ENCODE measurements at regions of chr1 and their contacts with region 1.

Region 1: DNA sequence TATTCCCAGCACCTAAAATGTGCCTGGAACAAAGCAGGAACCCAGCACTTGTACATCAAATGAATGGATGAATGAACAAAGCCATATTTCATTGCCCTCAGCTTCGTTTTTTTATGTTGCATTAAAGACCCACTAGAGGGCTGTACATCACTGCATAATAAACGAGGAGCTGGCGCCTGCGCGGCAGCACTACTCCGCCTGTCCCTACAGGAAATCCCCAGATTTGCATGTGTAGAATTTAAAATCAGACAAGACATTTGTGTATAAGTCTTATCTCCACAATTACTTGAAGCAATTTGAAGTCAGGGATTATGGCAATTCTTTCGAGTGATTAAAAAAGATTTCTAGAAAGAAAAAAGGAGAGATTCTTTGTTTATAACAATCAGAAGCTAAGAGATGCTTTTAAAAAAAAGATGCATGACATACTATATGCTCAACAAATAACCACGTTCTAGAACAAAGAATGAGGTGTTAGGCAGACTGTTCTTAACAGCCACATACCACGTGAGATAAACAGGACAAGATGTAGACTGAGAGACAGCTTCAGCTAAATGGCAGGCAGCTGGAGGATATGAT is 5.4 kb upstream of the NEK2 start:
- DNase-seq: peak; percentile 69
- H3K4me3 Mint-ChIP-seq: no peak overlapping the region
- H3K27ac Mint-ChIP-seq: no peak overlapping the region
- H3K4me1 Mint-ChIP-seq: peaks cover 11% of the 10 kb centered on the region
- H3K27me3 Mint-ChIP-seq: peaks cover 24% of the 10 kb centered on the region
- CTCF ChIP-seq: peak; percentile 60

Region 2: DNA sequence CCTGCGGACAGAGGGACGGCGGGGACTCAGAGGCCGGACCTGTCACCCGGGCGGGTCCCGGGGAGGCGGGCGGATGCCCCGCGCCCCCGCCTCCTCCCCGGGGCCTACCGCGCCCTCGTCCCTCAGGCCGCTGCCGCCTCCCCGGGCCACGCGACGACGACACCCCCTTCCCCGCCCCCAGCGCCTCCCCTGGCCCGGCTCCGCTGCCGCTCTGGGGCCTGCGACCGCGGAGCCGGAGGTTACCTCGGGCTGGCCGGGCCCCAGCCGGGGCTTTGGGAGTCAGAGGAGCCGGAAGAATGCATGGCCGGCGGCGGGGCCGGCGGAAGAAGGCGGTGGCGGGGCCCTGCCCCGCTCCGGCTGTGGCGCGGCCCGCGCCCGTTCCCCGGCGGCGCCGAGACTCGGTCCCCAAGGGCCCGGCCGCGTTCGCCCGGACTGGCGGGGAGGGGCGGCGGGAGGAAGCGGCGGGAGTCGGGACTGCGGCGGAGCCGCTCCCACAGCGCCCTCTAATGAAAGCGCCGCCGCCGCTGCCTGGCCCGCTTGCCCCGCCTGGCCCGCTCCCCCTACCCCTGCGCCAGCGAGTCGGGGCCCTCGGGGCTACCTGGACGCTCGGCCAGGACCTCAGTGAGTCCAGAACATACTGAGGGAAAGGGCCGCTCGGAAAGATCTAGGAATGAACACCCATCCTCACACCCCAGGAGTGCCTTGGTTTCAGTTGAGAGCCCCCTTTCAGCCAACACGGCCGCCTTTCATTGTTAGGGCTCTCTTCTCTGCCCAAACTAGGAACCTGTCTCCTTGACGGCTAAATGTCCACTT is 149.7 kb after region 1 on chr1 and contains the start of gene LPGAT1:
- CTCF ChIA-PET with region 1: interaction called, 3 read pairs
- intact Hi-C with region 1: loop called (anchors 5 kb)
- DNase-seq: peak; percentile 90
- H3K4me3 Mint-ChIP-seq: peak within 1 kb of the TSS; percentile 79
- H3K27ac Mint-ChIP-seq: peak within 1 kb of the TSS; percentile 65
- H3K4me1 Mint-ChIP-seq: peaks cover 17% of the 10 kb centered on the region
- H3K27me3 Mint-ChIP-seq: no peaks in the 10 kb centered on the region
- CTCF ChIP-seq: peak; percentile 70
- total RNA-seq, gene LPGAT1: 50.6 and 67.7 TPM in 2 replicates

Region 3: DNA sequence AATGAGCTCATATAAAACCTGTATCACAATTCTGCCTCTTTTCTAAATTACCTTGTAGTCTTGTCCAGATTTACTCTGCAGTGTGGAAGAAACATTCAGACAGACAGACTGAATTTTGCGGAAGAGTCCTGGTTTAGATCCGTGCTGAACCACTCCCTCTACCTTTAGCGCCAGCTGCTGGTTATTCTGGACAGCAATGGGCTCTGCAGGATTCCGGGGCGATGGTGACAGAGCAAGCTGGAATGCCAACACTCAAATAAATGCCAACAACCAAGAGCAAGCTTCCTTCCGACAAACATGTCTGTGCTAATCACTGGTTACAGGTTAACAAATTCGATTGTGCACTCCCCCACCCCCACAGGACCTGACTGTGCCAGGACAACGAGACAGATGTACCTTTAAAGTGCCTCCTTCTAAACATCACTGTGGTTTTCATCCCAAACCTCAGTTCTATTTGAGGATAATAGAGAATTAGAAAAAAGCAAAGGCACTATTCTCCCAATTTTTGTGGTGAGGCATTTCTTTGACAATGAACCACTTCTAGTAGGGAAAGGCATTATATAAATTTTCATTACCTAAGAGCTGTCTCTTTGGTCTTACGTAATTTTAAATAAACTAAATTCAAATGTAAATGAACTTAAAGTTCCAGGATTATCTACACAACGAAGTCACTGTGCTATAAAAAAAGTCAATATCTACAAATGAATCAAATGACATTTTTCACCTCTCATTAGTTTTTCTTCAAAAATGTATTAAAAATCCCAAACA is 264.1 kb after region 1 on chr1:
- CTCF ChIA-PET with region 1: interaction called, 25 read pairs
- intact Hi-C with region 1: loop called (anchors 5 kb)
- DNase-seq: peak; percentile 85
- H3K4me3 Mint-ChIP-seq: no peak overlapping the region
- H3K27ac Mint-ChIP-seq: peak overlapping the region; percentile 43
- H3K4me1 Mint-ChIP-seq: peaks cover 14% of the 10 kb centered on the region
- H3K27me3 Mint-ChIP-seq: no peaks in the 10 kb centered on the region
- CTCF ChIP-seq: peak; percentile 43

Region 4: DNA sequence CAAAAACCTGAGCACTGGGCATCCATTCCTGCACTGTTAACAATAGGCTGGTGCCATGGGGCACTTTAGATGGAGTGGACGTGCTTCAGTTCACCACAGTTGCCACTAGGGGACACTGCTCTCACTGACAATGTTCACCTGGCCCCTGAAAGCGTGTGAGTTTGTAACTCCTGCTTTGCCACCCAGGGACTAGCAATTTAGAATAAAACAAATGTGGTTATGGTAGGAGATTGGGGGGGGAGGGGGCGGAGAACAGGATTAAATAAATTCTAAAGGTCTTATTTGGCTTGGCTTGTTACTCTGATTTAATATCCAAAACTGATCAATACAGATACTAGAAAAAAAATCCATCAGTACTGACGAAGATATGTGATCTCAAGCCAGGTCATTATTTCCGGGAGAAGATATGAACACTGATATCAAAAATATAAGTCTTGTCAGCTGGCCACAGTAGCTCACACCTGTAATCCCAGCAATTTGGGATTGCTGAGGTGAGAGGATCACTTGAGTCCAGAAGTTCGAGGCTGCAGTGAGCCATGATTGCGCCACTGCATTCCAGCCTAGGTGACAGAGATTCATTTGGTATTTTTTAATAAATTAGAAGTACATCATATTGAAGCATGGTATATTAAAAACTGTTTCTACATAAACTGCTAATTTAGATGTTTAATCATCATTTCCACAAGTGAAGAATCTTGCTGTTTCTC is 331.3 kb after region 1 on chr1:
- CTCF ChIA-PET with region 1: interaction called, 3 read pairs
- intact Hi-C with region 1: loop called (anchors 5 kb)
- DNase-seq: peak; percentile 76
- H3K4me3 Mint-ChIP-seq: no peak overlapping the region
- H3K27ac Mint-ChIP-seq: no peak overlapping the region
- H3K4me1 Mint-ChIP-seq: no peaks in the 10 kb centered on the region
- H3K27me3 Mint-ChIP-seq: no peaks in the 10 kb centered on the region
- CTCF ChIP-seq: peak; percentile 94

Region 5: GRCh38 chr1:212035123-212035834 is 354.4 kb after region 1 on chr1 and contains the starts of genes DTL and INTS7:
- CTCF ChIA-PET with region 1: interaction called, 64 read pairs
- intact Hi-C with region 1: loop called (anchors 1 kb)
- DNase-seq: peak; percentile 99
- H3K4me3 Mint-ChIP-seq: peak within 1 kb of the TSS; percentile 92
- H3K27ac Mint-ChIP-seq: peak within 1 kb of the TSS; percentile 92
- H3K4me1 Mint-ChIP-seq: peaks cover 59% of the 10 kb centered on the region
- H3K27me3 Mint-ChIP-seq: no peaks in the 10 kb centered on the region
- CTCF ChIP-seq: peak; percentile 90
- total RNA-seq, gene DTL: 37.7 and 44.0 TPM in 2 replicates
- total RNA-seq, gene INTS7: 35.3 and 36.5 TPM in 2 replicates

Region 6: DNA sequence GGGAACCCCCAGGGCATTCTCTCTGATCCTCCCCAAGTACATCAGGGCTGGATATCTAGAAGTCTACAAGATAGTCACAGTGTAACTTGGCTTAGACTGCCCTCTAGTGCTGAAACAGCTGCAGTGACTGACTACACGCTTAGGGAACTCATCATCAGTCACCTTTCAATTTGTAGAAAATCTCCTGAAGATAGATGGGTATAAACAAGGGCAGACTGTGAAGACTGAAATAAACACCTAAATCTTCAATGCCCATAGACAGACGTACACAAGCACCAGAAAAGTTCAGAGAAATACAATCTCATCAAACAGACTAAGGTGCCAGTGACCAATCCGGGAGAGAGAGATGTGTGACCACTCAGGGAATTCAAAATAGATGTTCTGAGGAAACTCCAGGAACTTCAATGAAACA is 687.2 kb after region 1 on chr1:
- CTCF ChIA-PET with region 1: interaction called, 4 read pairs
- intact Hi-C with region 1: loop called (anchors 2 kb)
- DNase-seq: peak; percentile 66
- H3K4me3 Mint-ChIP-seq: no peak overlapping the region
- H3K27ac Mint-ChIP-seq: no peak overlapping the region
- H3K4me1 Mint-ChIP-seq: no peaks in the 10 kb centered on the region
- H3K27me3 Mint-ChIP-seq: no peaks in the 10 kb centered on the region
- CTCF ChIP-seq: peak; percentile 86

Region 7: GRCh38 chr1:212455803-212456528 is 775.1 kb after region 1 on chr1:
- CTCF ChIA-PET with region 1: interaction called, 26 read pairs
- intact Hi-C with region 1: loop called (anchors 5 kb)
- DNase-seq: peak; percentile 92
- H3K4me3 Mint-ChIP-seq: no peak overlapping the region
- H3K27ac Mint-ChIP-seq: no peak overlapping the region
- H3K4me1 Mint-ChIP-seq: no peaks in the 10 kb centered on the region
- H3K27me3 Mint-ChIP-seq: no peaks in the 10 kb centered on the region
- CTCF ChIP-seq: peak; percentile 98